Sigmoid colon (tissue), 7 donors: ENCODE measurements at regions of chr11 and their contacts with region 1.

Region 1: GRCh38 chr11:134124660-134125451 is 56.0 kb downstream of the JAM3 start:
- DNase-seq: peak; percentile 75
- H3K4me3 ChIP-seq: peak overlapping the region; percentile 36 to 58 (median 52)
- H3K27ac ChIP-seq: peak overlapping the region; percentile 66 to 95 (median 78)
- H3K4me1 ChIP-seq: peaks cover 0 to 56% (median 46%) of the 10 kb centered on the region in 4 donors
- H3K27me3 ChIP-seq: no peaks in the 10 kb centered on the region
- CTCF ChIP-seq: no peak
- EP300 ChIP-seq: no peak
- POLR2A ChIP-seq: no peak

Region 2: DNA sequence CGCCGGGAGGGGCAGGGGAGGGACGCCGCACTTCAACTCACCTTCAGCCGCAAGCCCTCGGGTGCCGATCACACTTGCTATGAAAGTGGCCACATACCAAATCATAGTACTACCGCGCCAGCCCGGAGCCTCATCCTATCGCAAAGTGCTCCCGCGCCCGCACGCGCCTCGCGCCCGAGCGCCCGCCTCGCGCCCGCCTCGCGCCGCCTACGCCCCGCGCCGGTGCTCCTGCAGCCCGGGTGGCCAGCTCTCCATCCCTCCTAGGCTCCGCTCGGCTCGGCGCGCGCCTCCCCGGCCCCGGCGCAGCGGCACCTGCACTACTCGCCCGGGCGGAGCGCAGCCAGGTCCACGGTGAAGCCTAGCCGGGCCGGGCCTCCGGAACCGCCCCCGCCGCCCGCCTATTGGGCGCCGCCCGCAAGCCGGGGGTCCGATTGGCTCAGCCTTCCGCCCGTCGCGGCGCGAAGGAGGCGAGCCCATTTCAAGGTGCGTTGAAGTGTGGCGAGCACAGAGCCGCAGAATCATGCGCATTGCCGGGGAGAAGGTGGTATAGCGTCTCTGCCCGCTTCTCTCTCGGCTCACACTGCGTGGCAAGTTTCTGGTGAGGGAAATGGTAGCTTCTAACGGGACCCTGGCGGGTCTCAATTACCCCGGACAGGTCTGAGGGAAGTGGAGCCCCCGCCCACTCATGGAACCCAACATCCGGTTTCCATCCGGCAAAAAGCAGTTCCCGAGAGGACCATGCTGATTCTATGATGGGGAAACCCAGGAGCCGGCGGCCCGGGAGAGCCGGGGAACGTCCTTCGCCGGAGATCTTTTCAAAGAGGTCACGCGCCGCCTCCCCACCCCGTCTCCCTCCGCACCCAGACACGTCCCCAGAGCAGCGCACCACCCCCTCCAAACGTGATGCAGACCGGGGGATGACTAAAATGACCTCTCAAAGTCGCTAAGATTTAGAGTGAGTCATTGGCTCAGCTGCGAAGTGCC is 167.9 kb before region 1 on chr11 and contains the start of gene IGSF9B:
- intact Hi-C with region 1: loop called (anchors 5 kb)
- DNase-seq: peak; percentile 94
- H3K4me3 ChIP-seq: peak within 1 kb of the TSS; percentile 55 to 80 (median 74)
- H3K27ac ChIP-seq: peak within 1 kb of the TSS; percentile 93 to 98 (median 95)
- H3K4me1 ChIP-seq: peaks cover 0 to 56% (median 44%) of the 10 kb centered on the region in 4 donors
- H3K27me3 ChIP-seq: no peaks in the 10 kb centered on the region
- CTCF ChIP-seq: no peak
- EP300 ChIP-seq: no peak
- POLR2A ChIP-seq: no peak
- total RNA-seq, gene IGSF9B: 12.5 to 53.7 (median 19.0) TPM

Region 3: DNA sequence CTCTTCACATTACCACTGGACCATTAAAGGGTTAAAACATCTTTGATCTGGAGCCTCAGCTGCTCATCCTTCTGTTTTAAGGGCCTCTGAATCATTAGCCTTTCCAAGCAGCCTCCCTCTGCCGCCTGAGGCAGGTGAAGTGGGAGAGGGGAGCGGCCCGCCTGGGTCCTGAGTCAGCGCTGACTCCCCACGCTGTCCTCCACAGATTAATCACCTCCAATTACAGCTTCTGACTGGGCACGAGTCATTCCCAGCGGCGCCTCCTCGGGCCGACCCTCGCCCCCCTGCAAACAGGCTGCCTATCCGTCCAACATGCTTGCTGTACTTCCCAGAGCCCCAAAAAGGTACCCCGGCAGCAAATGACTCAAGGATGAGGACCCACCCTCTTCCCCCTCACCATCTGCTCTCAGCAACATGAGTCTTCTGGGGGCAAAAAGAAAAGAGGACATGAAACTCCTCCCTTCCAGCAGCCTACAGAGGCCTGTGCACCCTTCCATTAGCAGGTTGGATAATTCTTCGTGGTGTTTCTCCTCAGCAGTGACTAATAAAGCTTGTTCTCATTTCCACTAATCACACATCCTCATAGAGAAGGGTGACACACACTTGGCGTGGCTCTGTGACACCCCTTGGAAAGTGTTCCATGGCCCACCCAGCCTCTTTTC is 100.3 kb before region 1 on chr11:
- intact Hi-C with region 1: no loop called
- DNase-seq: no peak
- H3K4me3 ChIP-seq: no peak overlapping the region
- H3K27ac ChIP-seq: no peak overlapping the region
- H3K4me1 ChIP-seq: no peaks in the 10 kb centered on the region
- H3K27me3 ChIP-seq: no peaks in the 10 kb centered on the region
- CTCF ChIP-seq: no peak
- EP300 ChIP-seq: no peak
- POLR2A ChIP-seq: no peak

Region 4: DNA sequence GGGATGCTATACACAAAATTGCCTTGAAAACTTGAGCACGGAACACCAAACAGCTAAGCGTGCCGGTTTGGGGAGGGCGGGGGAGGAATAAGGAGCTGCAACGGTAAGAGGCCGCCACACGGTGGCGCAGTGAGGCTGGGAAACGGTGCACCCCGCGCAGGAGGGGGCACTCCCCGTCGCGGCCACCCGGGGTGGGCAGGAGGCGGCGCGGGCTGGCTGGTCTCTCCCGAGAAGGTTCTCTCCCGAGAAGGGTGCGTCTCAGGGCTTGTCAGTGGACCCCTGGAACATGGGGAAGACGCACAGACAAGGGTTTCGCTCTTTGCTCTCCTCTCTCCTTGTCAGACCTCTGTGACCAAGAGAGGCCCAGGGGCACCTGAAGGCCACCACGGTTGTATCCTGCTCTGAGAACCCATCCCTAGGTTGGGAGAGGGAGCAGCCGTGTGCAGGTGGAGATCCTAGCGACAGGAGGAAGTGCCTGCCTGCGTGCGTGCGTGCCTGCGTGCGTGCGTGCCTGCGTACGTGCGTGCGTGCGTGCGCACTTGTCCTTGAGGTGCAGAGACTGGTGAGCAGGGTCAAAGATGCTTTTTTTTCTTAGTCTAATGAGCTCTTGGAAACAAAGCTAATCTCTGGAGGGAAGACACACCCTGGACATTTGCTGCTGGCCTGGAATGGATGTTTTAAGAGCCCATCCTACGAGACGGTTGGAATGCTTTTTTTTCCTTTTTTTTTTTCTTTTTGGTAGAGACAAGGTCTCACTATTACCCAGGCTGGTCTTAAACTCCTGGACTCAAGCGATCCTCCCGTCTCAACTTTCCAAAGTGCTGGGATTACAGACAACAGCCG is 74.1 kb before region 1 on chr11:
- intact Hi-C with region 1: loop called (anchors 5 kb)
- DNase-seq: peak; percentile 88
- H3K4me3 ChIP-seq: peak overlapping the region in 3 of 4 donors; percentile 30 to 37 (median 31)
- H3K27ac ChIP-seq: peak overlapping the region; percentile 28 to 57 (median 47)
- H3K4me1 ChIP-seq: peaks cover 0 to 33% (median 32%) of the 10 kb centered on the region in 4 donors
- H3K27me3 ChIP-seq: no peaks in the 10 kb centered on the region
- CTCF ChIP-seq: peak; percentile 92 to 96 (median 94)
- EP300 ChIP-seq: no peak
- POLR2A ChIP-seq: no peak

Region 5: DNA sequence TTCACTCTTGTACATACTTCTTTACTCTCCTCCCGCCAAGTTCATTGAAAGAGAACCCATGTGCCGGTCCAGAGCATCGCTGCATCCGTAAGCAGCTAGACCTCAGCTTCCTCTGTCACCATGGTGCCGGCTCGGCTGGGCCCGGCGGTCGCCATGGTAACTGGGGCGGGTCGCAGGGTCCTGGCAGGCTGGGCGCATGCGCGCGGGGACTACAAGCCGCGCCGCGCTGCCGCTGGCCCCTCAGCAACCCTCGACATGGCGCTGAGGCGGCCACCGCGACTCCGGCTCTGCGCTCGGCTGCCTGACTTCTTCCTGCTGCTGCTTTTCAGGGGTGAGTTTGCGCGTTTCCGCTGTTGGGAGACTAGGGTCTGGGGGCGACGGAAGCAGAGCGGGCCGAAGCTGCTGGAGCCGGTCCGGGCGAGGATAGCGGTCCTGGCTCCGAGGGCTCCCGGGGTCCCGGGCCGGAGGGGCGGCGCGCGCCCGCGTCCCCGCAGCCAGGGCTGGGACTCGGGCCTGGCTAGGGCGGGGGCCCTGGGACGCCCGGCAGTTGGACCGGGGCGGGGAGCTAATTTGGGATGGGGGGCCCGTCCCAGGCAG is 55.9 kb before region 1 on chr11 and contains the start of gene JAM3:
- intact Hi-C with region 1: loop called (anchors 2 kb)
- DNase-seq: peak; percentile 97
- H3K4me3 ChIP-seq: peak within 1 kb of the TSS; percentile 65 to 81 (median 72)
- H3K27ac ChIP-seq: peak within 1 kb of the TSS; percentile 88 to 93 (median 90)
- H3K4me1 ChIP-seq: peaks cover 0 to 27% (median 13%) of the 10 kb centered on the region in 4 donors
- H3K27me3 ChIP-seq: no peaks in the 10 kb centered on the region
- CTCF ChIP-seq: no peak
- EP300 ChIP-seq: no peak
- POLR2A ChIP-seq: peak; percentile 58 to 79
- total RNA-seq, gene JAM3: 69.4 to 125 (median 82.0) TPM

Region 6: DNA sequence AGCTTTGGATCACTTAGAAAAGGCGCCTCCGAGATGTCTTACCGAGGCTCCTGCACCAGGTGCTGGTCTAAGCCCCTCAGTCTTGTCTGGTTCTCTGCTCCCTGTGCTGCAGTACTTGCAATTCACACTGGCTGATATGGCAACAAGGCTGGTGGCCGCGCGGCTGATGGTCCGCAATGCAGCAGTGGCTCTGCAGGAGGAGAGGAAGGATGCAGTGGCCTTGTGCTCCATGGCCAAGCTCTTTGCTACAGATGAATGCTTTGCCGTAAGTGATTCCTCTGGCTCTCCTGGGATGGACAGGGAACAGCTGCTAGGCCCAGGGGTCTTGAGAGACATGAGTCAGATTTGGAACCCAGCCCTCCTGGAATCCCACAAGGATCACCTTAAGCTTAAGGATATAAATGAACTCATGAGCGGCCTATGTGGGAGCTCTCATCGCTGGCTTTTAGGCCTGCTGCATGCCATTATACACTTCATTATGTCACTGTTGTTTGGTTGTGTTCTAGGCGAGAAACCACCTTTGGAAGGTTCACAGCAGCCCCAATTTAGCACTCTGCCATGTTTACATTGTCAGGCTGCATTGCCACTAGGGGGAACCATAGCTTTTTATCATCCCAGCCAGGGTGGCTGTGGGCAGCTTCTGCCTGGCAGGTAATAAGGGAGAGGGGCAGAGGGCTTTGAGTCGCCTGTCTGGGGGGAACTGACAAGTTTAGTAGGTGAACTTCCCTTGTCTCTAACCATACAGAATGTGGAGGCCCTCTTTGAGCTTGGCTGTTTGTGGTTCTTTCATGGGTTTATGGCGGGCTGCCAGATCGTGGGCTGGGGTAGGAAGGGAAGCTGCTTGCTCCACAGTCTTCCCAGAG is 137.0 kb after region 1 on chr11:
- intact Hi-C with region 1: no loop called
- DNase-seq: no peak
- H3K4me3 ChIP-seq: no peak overlapping the region
- H3K27ac ChIP-seq: no peak overlapping the region
- H3K4me1 ChIP-seq: peaks cover 0 to 2% (median 0%) of the 10 kb centered on the region in 4 donors
- H3K27me3 ChIP-seq: no peaks in the 10 kb centered on the region
- CTCF ChIP-seq: peak in 3 of 4 experiments; percentile 12 to 35 (median 17)
- EP300 ChIP-seq: no peak
- POLR2A ChIP-seq: no peak